Left lung (tissue), 14 donors: ENCODE measurements at regions of chr5 and their contacts with region 1.

Region 1: GRCh38 chr5:93607367-93608258 is 24.6 kb downstream of the NR2F1 start:
- DNase-seq: no peak
- ATAC-seq: peak; percentile 80
- H3K4me3 ChIP-seq: no peak overlapping the region
- H3K27ac ChIP-seq: no peak overlapping the region
- H3K4me1 ChIP-seq: peaks cover 0 to 4% of the 10 kb centered on the region in 2 donors
- H3K27me3 ChIP-seq: peaks cover 89 to 100% of the 10 kb centered on the region in 2 donors
- CTCF ChIP-seq: peak; percentile 12 to 29

Region 2: GRCh38 chr5:93145767-93146166 is 461.8 kb before region 1 on chr5:
- intact Hi-C with region 1: no loop called
- DNase-seq: no peak
- ATAC-seq: no peak
- H3K4me3 ChIP-seq: no peak overlapping the region
- H3K27ac ChIP-seq: no peak overlapping the region
- H3K4me1 ChIP-seq: no peaks in the 10 kb centered on the region
- H3K27me3 ChIP-seq: no peaks in the 10 kb centered on the region
- CTCF ChIP-seq: no peak

Region 3: DNA sequence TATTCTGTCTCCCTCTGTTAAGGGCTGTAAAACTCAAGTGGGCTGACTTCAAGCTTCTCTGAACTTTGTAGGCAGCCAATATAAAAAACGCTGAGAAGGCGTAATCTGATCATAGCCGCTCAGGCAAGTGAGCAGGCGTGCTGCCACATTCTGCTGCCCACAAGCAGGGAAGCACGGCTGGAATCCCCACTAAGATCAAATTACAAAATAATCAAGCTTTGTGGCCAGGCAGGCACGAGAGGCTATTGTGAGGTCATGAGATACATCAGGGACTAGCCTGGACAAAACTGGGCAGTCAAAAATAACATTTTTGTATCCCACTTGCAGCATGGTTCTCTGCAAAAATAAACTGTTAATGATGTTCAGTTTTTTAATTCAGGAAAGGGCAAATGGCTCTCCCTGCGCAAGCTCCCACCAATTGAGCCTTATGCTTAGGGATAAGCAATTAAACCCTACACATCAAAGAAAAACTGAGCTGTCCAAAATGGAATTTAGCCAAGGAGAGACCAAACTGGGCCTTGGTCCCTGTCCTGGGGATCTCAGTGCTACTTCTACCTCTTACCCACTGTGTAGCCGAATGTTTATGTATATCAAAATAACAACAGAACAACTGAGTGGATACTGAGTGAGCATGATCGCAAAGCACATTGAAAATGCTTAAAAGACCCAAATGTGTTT is 69.9 kb after region 1 on chr5:
- intact Hi-C with region 1: no loop called
- DNase-seq: peak in 3 of 4 donors; percentile 41 to 73 (median 56)
- ATAC-seq: peak; percentile 70
- H3K4me3 ChIP-seq: no peak overlapping the region
- H3K27ac ChIP-seq: no peak overlapping the region
- H3K4me1 ChIP-seq: peaks cover 0 to 7% of the 10 kb centered on the region in 2 donors
- H3K27me3 ChIP-seq: no peaks in the 10 kb centered on the region
- CTCF ChIP-seq: no peak

Region 4: DNA sequence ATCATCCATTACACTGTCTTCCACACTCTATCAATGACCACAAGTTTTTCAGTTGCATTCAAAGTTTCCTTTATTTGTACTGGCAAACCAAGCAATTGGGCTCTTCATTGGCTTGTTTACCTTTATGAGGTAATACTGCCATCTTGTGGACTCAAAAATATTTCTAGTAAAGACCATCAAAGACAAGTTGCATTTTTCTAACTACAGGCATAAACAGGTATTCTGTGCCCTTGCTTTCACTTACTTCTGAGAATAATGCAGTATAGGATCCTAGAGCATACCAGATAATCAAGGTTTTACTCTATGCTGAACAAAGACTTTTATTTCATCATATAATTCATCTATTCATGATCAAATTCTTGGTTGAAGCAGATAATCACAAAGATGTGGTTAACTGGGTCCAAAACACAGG is 307.5 kb after region 1 on chr5:
- intact Hi-C with region 1: loop called in 1 of 2 experiments (anchors 10 kb)
- DNase-seq: no peak
- ATAC-seq: peak; percentile 54
- H3K4me3 ChIP-seq: no peak overlapping the region
- H3K27ac ChIP-seq: no peak overlapping the region
- H3K4me1 ChIP-seq: no peaks in the 10 kb centered on the region
- H3K27me3 ChIP-seq: no peaks in the 10 kb centered on the region
- CTCF ChIP-seq: peak; percentile 37 to 59